MCF 10A (cell line): ENCODE measurements at regions of chr7 and their contacts with region 1.

Region 1: GRCh38 chr7:42198974-42199668 is 37.9 kb downstream of the GLI3 start:
- DNase-seq: no peak
- H3K4me3 Mint-ChIP-seq: no peak overlapping the region
- H3K27ac Mint-ChIP-seq: peak overlapping the region; percentile 81
- H3K4me1 Mint-ChIP-seq: peaks cover 38% of the 10 kb centered on the region
- H3K27me3 Mint-ChIP-seq: no peaks in the 10 kb centered on the region
- CTCF ChIP-seq: no peak

Region 2: DNA sequence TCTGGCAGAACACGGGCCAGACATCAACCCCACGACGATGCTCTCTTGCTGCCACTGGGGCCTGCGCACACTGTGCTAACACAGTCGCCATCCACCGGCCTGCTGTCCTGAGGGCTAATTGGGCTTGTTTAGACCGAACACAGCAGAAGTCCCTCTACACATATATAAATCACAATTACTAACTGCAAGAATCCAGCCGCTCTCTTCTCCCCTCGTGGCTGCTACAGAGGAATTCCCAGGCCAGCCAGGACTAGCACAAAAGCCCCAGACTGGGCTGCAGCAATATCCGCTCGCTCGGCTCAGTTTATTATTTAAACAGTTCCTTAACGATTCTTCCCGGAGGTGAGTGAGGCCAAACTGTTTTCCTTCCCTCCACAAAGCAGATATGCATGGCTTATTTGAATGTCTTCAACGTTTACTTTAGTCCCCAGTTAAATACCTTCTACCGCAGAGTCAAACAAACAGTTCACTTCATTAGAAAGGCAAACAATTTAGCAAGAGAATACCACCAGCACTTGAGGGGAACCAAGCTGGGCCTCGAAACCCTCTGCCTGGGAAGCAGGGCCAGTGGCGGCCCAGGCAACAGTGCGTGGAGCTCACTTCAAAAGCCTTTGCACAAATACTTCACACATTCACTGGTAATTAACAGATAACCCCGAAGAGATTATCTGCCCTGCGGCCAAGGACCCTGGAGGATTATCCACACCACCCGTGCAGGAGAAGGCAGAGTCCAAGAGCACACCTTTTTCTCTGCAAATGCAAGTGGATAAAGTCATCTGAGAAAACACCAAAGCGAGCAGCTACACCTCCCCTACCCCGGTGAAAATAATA is 107.4 kb before region 1 on chr7:
- CTCF ChIA-PET with region 1: no interaction called
- POLR2A ChIA-PET with region 1: no interaction called
- intact Hi-C with region 1: no loop called
- DNase-seq: no peak
- H3K4me3 Mint-ChIP-seq: no peak overlapping the region
- H3K27ac Mint-ChIP-seq: no peak overlapping the region
- H3K4me1 Mint-ChIP-seq: peaks cover 25% of the 10 kb centered on the region
- H3K27me3 Mint-ChIP-seq: no peaks in the 10 kb centered on the region
- CTCF ChIP-seq: no peak

Region 3: DNA sequence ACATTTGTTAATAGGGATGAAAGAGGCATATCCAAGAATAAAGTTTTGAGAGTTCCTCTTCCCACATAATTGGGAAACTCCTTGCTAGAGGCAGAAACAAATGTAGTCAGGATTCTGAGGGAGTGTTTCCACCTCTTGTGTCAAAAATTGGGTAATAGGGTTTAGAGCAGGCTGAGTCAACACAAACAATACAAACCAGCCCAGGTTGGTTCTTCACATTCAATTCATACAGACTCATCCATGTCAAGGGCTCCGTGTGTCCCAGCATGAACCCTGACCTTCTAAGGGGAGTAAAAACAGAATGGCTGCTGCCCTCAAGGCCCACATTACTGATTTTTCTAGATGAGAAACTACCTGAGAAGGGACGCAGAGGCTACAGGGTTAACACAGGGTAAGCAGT is 37.4 kb before region 1 on chr7:
- CTCF ChIA-PET with region 1: no interaction called
- POLR2A ChIA-PET with region 1: interaction called, 15 read pairs
- intact Hi-C with region 1: no loop called
- DNase-seq: peak; percentile 95
- H3K4me3 Mint-ChIP-seq: peak overlapping the region; percentile 28
- H3K27ac Mint-ChIP-seq: peak overlapping the region; percentile 95
- H3K4me1 Mint-ChIP-seq: peaks cover 34% of the 10 kb centered on the region
- H3K27me3 Mint-ChIP-seq: no peaks in the 10 kb centered on the region
- CTCF ChIP-seq: no peak

Region 4: GRCh38 chr7:42219447-42219846 is 20.3 kb after region 1 on chr7:
- CTCF ChIA-PET with region 1: interaction called, 3 read pairs
- POLR2A ChIA-PET with region 1: interaction called, 33 read pairs
- intact Hi-C with region 1: no loop called
- DNase-seq: peak; percentile 64
- H3K4me3 Mint-ChIP-seq: peak overlapping the region; percentile 50
- H3K27ac Mint-ChIP-seq: peak overlapping the region; percentile 59
- H3K4me1 Mint-ChIP-seq: peaks cover 33% of the 10 kb centered on the region
- H3K27me3 Mint-ChIP-seq: no peaks in the 10 kb centered on the region
- CTCF ChIP-seq: no peak

Region 5: GRCh38 chr7:42590771-42591310 is 391.7 kb after region 1 on chr7:
- CTCF ChIA-PET with region 1: no interaction called
- POLR2A ChIA-PET with region 1: no interaction called
- intact Hi-C with region 1: no loop called
- DNase-seq: no peak
- H3K4me3 Mint-ChIP-seq: no peak overlapping the region
- H3K27ac Mint-ChIP-seq: no peak overlapping the region
- H3K4me1 Mint-ChIP-seq: peaks cover 7% of the 10 kb centered on the region
- H3K27me3 Mint-ChIP-seq: no peaks in the 10 kb centered on the region
- CTCF ChIP-seq: no peak